ENCODE measurements at regions of chr11 and their contacts with region 1.

Region 1: GRCh38 chr11:112345708-112346107 is 85.0 kb upstream of the PLET1 start:
- DNase-seq: no peak
- ATAC-seq: peak; percentile 35; the same call in 1 of the 2 replicates
- H3K4me3 ChIP-seq: no peak overlapping the region
- H3K27ac ChIP-seq: no peak overlapping the region
- H3K4me1 ChIP-seq: no peaks in the 10 kb centered on the region
- H3K27me3 ChIP-seq: peaks cover 26% of the 10 kb centered on the region; the same call in 1 of the 2 replicates
- CTCF ChIP-seq: peak; percentile 37; the same call in 1 of the 2 replicates

Region 2: GRCh38 chr11:112355726-112356125 is 10.0 kb after region 1 on chr11:
- CTCF ChIA-PET with region 1: no interaction called
- POLR2A ChIA-PET with region 1: no interaction called
- intact Hi-C with region 1: no loop called
- DNase-seq: peak; percentile 59
- ATAC-seq: peak; percentile 42; the same call in 1 of the 2 replicates
- H3K4me3 ChIP-seq: no peak overlapping the region
- H3K27ac ChIP-seq: no peak overlapping the region
- H3K4me1 ChIP-seq: no peaks in the 10 kb centered on the region
- H3K27me3 ChIP-seq: peaks cover 4% of the 10 kb centered on the region; the same call in 1 of the 2 replicates
- CTCF ChIP-seq: peak; percentile 63

Region 3: DNA sequence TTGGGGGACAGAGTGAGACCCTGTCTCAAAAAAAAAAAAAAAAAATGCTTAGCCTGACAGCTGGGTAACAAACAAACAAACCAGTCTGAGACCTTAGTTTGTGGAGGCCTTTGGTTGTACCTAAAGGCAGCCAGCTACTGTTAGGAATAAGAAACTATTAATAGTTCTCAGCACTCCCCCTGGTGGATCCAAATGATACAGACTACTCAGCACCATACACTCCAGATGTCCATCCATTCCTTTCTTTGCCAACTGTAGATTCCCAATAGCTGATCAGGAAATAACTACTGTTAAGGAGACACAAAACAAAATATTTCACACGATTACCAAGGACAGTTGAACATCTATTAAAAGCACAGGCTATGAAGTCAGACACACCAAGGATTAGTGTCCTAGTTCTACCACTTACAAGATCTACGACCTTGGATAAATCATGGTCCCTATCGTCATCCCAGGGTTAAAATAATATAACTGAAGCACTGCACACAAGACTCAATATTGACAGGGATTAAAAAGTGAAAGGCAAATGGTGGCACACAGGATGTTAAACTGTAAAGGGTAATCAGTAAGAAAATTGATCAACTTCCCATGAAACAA is 1451.1 kb after region 1 on chr11:
- CTCF ChIA-PET with region 1: interaction called, 10 read pairs
- POLR2A ChIA-PET with region 1: no interaction called
- intact Hi-C with region 1: no loop called
- DNase-seq: peak; percentile 74
- ATAC-seq: peak; percentile 99
- H3K4me3 ChIP-seq: no peak overlapping the region
- H3K27ac ChIP-seq: no peak overlapping the region
- H3K4me1 ChIP-seq: no peaks in the 10 kb centered on the region
- H3K27me3 ChIP-seq: no peaks in the 10 kb centered on the region
- CTCF ChIP-seq: peak; percentile 82

Measured in PC-3 (cell line).